ENCODE measurements at regions of chr19 and their contacts with region 1.

Region 1: GRCh38 chr19:6424939-6425731 is 524 bp upstream of the KHSRP start:
- DNase-seq: peak; percentile 97 to 100 (median 100)
- H3K4me3 ChIP-seq: peak overlapping the region in 58 of 59 donors; percentile 2 to 92 (median 56)
- H3K27ac ChIP-seq: peak overlapping the region; percentile 18 to 96 (median 88)
- H3K27me3 ChIP-seq: no peaks in the 10 kb centered on the region
- CTCF ChIP-seq: peak in 22 of 56 donors; percentile 2 to 38 (median 18)

Region 2: DNA sequence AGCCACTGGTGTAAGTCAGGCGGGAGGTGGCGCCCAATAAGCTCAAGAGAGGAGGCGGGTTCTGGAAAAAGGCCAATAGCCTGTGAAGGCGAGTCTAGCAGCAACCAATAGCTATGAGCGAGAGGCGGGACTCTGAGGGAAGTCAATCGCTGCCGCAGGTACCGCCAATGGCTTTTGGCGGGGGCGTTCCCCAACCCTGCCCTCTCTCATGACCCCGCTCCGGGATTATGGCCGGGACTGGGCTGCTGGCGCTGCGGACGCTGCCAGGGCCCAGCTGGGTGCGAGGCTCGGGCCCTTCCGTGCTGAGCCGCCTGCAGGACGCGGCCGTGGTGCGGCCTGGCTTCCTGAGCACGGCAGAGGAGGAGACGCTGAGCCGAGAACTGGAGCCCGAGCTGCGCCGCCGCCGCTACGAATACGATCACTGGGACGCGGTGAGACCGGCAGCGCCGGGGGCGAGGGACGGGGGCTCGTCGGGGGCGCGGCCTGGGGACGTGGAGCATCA is 52.5 kb before region 1 on chr19 and contains the start of gene ALKBH7:
- intact Hi-C with region 1: loop called in 1 of 2 experiments (anchors 2 kb)
- DNase-seq: peak; percentile 87 to 100 (median 99)
- H3K4me3 ChIP-seq: peak within 1 kb of the TSS; percentile 65 to 99 (median 93)
- H3K27ac ChIP-seq: peak within 1 kb of the TSS; percentile 45 to 100 (median 97)
- H3K27me3 ChIP-seq: no peaks in the 10 kb centered on the region
- CTCF ChIP-seq: peak in 31 of 56 donors; percentile 2 to 61 (median 32)
- total RNA-seq, gene ALKBH7: 39.9 to 75.3 (median 52.4) TPM

Region 3: GRCh38 chr19:6460101-6460853 is 35.1 kb after region 1 on chr19:
- intact Hi-C with region 1: loop called in 1 of 2 experiments (anchors 2 kb)
- DNase-seq: peak; percentile 98 to 100 (median 99)
- H3K4me3 ChIP-seq: peak overlapping the region; percentile 52 to 98 (median 86)
- H3K27ac ChIP-seq: peak overlapping the region; percentile 9 to 92 (median 83)
- H3K27me3 ChIP-seq: peaks cover 0 to 27% (median 13%) of the 10 kb centered on the region in 45 donors
- CTCF ChIP-seq: peak in 54 of 56 donors; percentile 7 to 75 (median 52)

Region 4: DNA sequence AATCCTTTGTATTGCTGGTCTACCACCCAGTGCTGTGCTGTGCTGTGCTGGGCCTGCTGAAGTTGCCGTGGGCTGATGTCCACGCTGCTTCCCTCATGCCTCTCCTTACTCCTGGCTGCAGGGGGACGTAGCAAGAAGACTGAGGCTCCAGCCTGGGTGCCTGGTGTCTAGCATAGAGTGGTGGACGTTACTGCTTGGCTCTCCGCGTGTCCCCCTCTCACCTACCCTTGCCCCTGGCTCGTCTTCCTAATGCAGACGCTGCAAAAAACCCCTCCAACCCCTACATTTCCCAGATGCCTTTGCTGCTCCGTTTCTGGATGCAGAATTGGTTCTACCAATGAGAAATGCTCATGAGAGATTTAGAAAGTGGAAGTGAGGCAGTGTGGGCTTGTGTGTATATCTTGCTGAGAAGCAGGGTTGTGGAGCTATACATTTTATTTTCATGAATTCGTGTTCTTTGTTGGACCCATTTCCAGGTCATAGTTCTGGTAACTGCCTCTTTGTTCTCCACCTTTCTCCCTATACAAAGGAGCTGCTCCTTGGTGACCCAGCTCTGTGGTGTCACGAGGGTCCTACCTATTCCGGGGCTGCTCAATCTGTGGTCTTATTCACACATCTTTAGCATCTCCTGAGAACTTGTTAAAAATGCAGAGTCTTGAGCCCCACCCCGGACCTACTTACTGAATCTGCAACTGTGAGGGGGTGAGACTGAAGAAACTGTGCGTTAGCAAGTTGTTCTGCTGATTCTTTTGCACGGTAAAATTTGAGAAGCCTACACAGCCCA is 64.3 kb after region 1 on chr19:
- intact Hi-C with region 1: no loop called
- DNase-seq: no peak
- H3K4me3 ChIP-seq: peak overlapping the region in 35 of 59 donors; percentile 1 to 48 (median 21)
- H3K27ac ChIP-seq: peak overlapping the region in 45 of 59 donors; percentile 2 to 81 (median 51)
- H3K27me3 ChIP-seq: no peaks in the 10 kb centered on the region
- CTCF ChIP-seq: no peak

Region 5: DNA sequence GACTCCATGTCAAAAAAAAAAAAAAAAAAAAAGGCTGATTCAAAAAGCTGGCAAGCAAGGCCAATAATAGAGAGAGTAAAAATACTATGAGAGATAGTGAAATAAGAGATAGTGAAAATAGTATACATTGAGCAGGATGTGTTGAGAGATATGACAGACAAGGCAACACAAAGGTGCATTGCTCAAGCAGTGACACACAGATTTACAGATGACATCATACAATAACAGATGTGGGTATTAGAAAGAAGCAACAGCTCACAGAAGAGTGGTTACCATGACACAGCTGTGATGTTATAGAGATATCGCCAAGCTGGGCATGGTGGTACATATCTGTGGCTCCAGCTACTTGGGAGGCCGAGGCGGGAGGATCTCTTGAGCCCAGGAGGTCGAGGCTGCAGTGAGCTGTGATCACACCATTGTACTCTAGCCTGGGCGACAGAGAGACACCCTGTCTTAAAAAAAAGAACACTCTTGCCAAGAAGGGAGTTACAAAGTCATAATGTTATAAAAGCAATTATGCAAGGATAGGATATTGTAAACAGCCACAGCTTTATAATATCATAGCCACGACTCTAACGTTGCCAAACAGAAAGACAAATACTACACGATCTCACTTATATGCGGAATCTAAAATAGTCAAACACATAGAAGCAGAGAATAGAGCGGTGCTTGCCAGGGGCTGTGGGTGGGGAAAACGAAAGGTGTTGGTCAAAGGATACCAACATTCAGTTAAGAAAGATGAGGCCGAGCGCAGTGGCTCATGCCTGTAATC is 116.0 kb after region 1 on chr19:
- intact Hi-C with region 1: no loop called
- DNase-seq: no peak
- H3K4me3 ChIP-seq: no peak overlapping the region
- H3K27ac ChIP-seq: no peak overlapping the region
- H3K27me3 ChIP-seq: no peaks in the 10 kb centered on the region
- CTCF ChIP-seq: no peak

Measured in dorsolateral prefrontal cortex (tissue), 120 donors.